ENCODE measurements at regions of chr4 and their contacts with region 1.

Region 1: DNA sequence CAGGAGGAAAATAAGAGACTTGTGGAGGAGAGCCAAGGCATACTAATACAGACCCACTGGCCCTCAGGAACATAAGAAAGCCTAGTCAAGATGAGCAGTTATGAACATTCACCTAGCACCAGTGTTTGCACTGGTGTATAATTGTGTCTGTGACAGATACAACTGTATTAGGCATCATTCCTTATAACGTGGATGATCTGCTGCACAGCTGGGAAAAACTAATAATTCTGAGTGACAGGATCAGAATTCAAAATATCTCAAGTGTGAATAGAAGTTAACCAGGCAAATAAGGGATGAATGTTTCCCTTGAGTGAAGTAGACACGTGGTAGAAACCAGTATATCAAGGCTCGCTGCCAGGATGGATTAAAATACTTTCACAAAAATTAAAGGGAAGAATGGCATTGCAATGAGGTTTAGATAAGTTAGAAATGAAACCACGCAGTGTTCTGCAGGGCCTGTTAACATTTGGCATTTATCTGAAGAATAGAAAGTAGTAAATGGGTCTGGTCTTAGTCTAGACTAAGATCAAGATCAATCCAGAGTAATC is 325.9 kb downstream of the EPHA5 start:
- DNase-seq: no peak
- H3K4me3 ChIP-seq: no peak overlapping the region
- H3K27ac ChIP-seq: no peak overlapping the region
- H3K4me1 ChIP-seq: no peaks in the 10 kb centered on the region
- H3K27me3 ChIP-seq: no peaks in the 10 kb centered on the region
- CTCF ChIP-seq: no peak
- POLR2A ChIP-seq: no peak

Region 2: GRCh38 chr4:64857198-64857597 is 487.2 kb before region 1 on chr4:
- CTCF ChIA-PET with region 1: no interaction called
- POLR2A ChIA-PET with region 1: no interaction called
- dilution Hi-C with region 1: no loop called
- intact Hi-C with region 1: no loop called
- DNase-seq: no peak
- H3K4me3 ChIP-seq: no peak overlapping the region
- H3K27ac ChIP-seq: no peak overlapping the region
- H3K4me1 ChIP-seq: no peaks in the 10 kb centered on the region
- H3K27me3 ChIP-seq: no peaks in the 10 kb centered on the region
- CTCF ChIP-seq: no peak
- POLR2A ChIP-seq: no peak

Region 3: GRCh38 chr4:65358914-65359313 is 14.6 kb after region 1 on chr4:
- CTCF ChIA-PET with region 1: interaction called, 12 read pairs
- POLR2A ChIA-PET with region 1: no interaction called
- dilution Hi-C with region 1: no loop called
- intact Hi-C with region 1: no loop called
- DNase-seq: no peak
- H3K4me3 ChIP-seq: no peak overlapping the region
- H3K27ac ChIP-seq: no peak overlapping the region
- H3K4me1 ChIP-seq: no peaks in the 10 kb centered on the region
- H3K27me3 ChIP-seq: no peaks in the 10 kb centered on the region
- CTCF ChIP-seq: no peak
- POLR2A ChIP-seq: no peak

Measured in endothelial cell of umbilical vein (primary cell).